CD8-positive, alpha-beta T cell (primary cell): ENCODE measurements at regions of chr17 and their contacts with region 1.

Region 1: DNA sequence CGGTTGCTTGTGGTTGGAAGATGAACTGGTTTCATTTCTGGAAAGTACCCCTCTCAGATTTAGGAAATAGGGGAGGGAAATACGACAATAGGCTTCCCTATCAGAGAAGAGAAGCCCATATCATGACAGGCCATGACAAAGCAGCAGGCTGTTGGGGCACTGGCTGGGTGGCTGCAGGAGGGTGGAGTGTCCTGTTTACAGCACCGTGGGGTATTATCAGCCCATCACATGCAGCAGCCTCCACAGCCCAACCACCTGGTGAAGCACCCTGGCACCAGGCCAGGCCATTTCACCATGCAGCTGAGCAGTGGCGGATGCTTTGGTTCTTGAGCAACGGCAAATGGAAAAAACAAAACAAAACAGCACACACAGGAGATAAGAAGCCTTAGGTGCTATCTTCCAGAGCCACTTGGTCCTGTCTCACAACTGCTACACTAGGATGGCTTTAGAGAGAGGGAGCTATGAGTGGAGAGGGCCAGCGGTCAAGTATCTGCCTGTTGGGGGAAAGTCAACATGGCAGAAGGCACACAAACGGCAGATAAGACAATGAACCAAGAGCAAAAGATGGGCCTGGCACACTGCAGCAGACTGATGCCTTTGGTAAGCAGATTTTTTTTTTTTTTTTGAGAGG is 24.2 kb downstream of the FAM117A start:
- DNase-seq: peak; percentile 91 to 99 (median 98)
- ATAC-seq: peak; percentile 95
- H3K4me3 ChIP-seq: peak overlapping the region; percentile 42 to 54
- H3K4me3 Mint-ChIP-seq: peak overlapping the region; percentile 90
- H3K27ac ChIP-seq: peak overlapping the region; percentile 77 to 96
- H3K27ac Mint-ChIP-seq: peak overlapping the region; percentile 100
- H3K4me1 ChIP-seq: peaks cover 83% of the 10 kb centered on the region
- H3K4me1 Mint-ChIP-seq: peaks cover 87% of the 10 kb centered on the region
- H3K27me3 ChIP-seq: no peaks in the 10 kb centered on the region
- H3K27me3 Mint-ChIP-seq: no peaks in the 10 kb centered on the region
- CTCF ChIP-seq: no peak

Region 2: DNA sequence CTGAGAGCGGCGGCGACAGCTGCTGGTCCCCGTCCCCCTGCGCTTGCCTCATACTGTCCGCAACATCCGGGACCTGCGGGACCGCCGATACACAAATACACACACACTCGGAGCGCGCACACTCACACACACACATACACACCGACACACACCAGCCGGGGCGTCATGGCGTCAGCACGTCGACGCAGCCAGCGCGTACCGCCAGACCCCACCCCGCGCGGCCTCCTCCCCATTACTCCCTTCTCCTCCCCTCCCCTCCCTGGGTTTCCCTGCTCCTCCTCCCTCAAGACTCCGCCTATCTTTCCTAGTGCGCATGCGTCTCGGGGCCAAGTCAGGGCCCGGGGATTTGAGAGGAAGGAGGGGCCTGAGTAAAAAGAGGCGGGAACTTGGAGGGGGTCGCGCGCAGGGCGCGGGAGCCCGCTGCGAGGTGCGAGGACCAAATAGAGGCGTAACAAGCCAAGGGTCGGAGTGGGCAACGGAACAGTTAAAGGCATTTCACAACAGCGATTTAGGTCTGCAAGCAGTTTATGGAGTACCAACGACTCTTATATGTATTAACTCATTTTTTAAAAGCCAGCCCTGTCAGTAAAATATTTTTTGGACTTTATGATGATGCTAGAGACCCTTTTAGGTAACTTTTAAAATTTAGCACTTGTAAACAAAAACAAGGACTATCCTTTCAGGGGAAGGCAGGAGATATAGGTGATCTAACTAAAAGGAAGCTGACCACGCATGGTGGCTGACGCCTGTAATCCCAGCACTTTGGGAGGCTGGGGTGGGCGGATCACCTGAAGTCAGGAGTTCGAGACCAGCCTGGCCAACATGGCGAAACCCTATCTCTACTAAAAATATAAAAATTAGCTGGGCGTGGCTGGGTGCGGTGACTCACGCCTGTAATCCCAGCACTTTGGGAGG is 61.6 kb before region 1 on chr17 and contains the start of gene SPOP:
- CTCF ChIA-PET with region 1: no interaction called
- POLR2A ChIA-PET with region 1: interaction called, 4 read pairs
- intact Hi-C with region 1: loop called (anchors 1 to 2 kb)
- DNase-seq: peak; percentile 97 to 100 (median 99)
- ATAC-seq: peak; percentile 94
- H3K4me3 ChIP-seq: peak within 1 kb of the TSS; percentile 76 to 81
- H3K4me3 Mint-ChIP-seq: peak within 1 kb of the TSS; percentile 97
- H3K27ac ChIP-seq: peak within 1 kb of the TSS; percentile 91 to 98
- H3K27ac Mint-ChIP-seq: peak within 1 kb of the TSS; percentile 100
- H3K4me1 ChIP-seq: peaks cover 29% of the 10 kb centered on the region
- H3K4me1 Mint-ChIP-seq: peaks cover 49% of the 10 kb centered on the region
- H3K27me3 ChIP-seq: no peaks in the 10 kb centered on the region
- H3K27me3 Mint-ChIP-seq: no peaks in the 10 kb centered on the region
- CTCF ChIP-seq: no peak
- total RNA-seq, gene SPOP: 30.5 to 34.3 TPM

Region 3: DNA sequence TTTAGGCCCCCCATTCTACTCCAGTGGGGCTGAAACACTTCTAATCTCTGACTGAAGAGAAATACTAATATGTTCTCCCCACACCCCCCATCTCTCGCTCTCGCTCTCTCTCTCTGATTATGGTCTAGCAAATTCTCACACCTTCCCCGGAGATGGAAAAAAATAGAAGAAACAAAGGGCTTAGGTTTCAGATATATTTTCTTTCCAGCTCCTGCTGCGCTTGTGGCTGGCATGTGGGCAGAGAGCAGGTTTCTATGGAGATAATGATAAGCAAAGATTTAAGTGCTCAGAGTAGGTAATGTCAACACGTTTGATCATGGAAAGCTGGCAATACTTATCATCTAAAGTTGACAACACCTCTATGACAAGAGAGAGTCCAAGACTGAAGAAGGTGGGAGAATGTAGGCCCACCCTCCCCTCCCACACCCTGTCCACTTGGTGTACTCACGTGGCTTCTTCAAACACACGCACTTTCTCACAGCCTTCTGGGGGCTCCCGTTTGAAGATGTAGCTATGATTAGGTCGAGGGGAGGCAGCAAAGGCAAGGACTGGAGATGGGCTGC is 24.0 kb before region 1 on chr17:
- CTCF ChIA-PET with region 1: interaction called, 22 read pairs
- POLR2A ChIA-PET with region 1: interaction called, 6 read pairs
- intact Hi-C with region 1: loop called (anchors 1 to 2 kb)
- DNase-seq: peak in 6 of 9 experiments; percentile 27 to 92 (median 58)
- ATAC-seq: peak; percentile 65
- H3K4me3 ChIP-seq: no peak overlapping the region
- H3K4me3 Mint-ChIP-seq: peak overlapping the region; percentile 20
- H3K27ac ChIP-seq: peak overlapping the region; percentile 67 to 91
- H3K27ac Mint-ChIP-seq: peak overlapping the region; percentile 92
- H3K4me1 ChIP-seq: peaks cover 31% of the 10 kb centered on the region
- H3K4me1 Mint-ChIP-seq: peaks cover 41% of the 10 kb centered on the region
- H3K27me3 ChIP-seq: no peaks in the 10 kb centered on the region
- H3K27me3 Mint-ChIP-seq: no peaks in the 10 kb centered on the region
- CTCF ChIP-seq: no peak

Region 4: GRCh38 chr17:49725452-49726130 is 14.2 kb before region 1 on chr17:
- CTCF ChIA-PET with region 1: interaction called, 4 read pairs
- POLR2A ChIA-PET with region 1: interaction called, 4 read pairs
- intact Hi-C with region 1: loop called in 1 of 2 experiments (anchors 1 kb)
- DNase-seq: no peak
- ATAC-seq: no peak
- H3K4me3 ChIP-seq: no peak overlapping the region
- H3K4me3 Mint-ChIP-seq: no peak overlapping the region
- H3K27ac ChIP-seq: no peak overlapping the region
- H3K27ac Mint-ChIP-seq: peak overlapping the region; percentile 42
- H3K4me1 ChIP-seq: peaks cover 37% of the 10 kb centered on the region
- H3K4me1 Mint-ChIP-seq: peaks cover 59% of the 10 kb centered on the region
- H3K27me3 ChIP-seq: no peaks in the 10 kb centered on the region
- H3K27me3 Mint-ChIP-seq: no peaks in the 10 kb centered on the region
- CTCF ChIP-seq: no peak

Region 5: GRCh38 chr17:49753959-49754391 is 14.2 kb after region 1 on chr17:
- CTCF ChIA-PET with region 1: interaction called, 4 read pairs
- POLR2A ChIA-PET with region 1: interaction called, 17 read pairs
- intact Hi-C with region 1: no loop called
- DNase-seq: no peak
- ATAC-seq: no peak
- H3K4me3 ChIP-seq: no peak overlapping the region
- H3K4me3 Mint-ChIP-seq: peak overlapping the region; percentile 22
- H3K27ac ChIP-seq: peak overlapping the region in 1 of 2 experiments; percentile 21
- H3K27ac Mint-ChIP-seq: peak overlapping the region; percentile 86
- H3K4me1 ChIP-seq: peaks cover 74% of the 10 kb centered on the region
- H3K4me1 Mint-ChIP-seq: peaks cover 76% of the 10 kb centered on the region
- H3K27me3 ChIP-seq: no peaks in the 10 kb centered on the region
- H3K27me3 Mint-ChIP-seq: no peaks in the 10 kb centered on the region
- CTCF ChIP-seq: no peak

Region 6: DNA sequence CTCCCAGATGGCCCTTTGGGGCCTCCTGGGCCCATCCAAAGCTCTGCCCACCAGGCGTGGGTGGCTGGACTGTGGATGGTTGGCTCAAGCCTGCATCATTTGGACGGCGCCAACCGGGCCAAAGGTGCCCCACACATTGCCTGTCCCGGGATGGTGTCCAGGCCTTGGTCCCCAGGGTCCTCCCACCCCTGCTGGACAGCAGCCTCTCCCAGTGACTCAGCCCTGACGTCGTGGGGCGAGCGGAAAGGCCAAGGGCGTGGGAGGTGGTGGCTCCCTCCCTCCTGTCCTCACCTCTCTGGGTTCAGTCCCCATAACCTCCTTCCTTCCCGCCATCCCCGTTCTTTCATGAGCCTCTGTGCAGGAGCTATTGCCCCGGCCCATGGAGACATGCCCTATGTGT is 187.1 kb after region 1 on chr17:
- CTCF ChIA-PET with region 1: no interaction called
- POLR2A ChIA-PET with region 1: no interaction called
- intact Hi-C with region 1: no loop called
- DNase-seq: no peak
- ATAC-seq: no peak
- H3K4me3 ChIP-seq: no peak overlapping the region
- H3K4me3 Mint-ChIP-seq: no peak overlapping the region
- H3K27ac ChIP-seq: no peak overlapping the region
- H3K27ac Mint-ChIP-seq: no peak overlapping the region
- H3K4me1 ChIP-seq: no peaks in the 10 kb centered on the region
- H3K4me1 Mint-ChIP-seq: no peaks in the 10 kb centered on the region
- H3K27me3 ChIP-seq: no peaks in the 10 kb centered on the region
- H3K27me3 Mint-ChIP-seq: peaks cover 27% of the 10 kb centered on the region
- CTCF ChIP-seq: no peak